ENCODE measurements at regions of chr17 and their contacts with region 1.

Region 1: DNA sequence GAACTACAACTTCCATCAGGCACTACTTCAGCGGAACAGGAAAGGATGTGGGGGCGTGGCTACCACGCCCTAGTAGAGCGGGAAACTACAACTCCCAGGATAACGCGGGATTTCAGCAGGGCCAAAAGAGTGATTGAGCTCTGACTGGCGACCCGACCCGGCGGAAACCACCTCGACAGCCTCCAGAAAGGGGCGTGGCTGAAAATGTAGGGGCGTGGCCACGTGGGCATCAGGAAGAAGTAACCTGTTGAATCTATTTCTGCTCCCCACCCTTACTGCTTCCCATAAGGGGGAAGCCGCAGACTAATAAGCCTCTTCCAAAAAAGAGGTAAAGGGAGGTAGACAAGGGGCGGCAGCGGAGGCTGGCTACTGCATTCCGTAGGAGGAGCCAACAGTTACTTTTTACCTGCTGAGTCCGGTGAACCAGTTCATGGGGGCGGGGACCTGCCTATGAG is at the start of gene TMEM102:
- DNase-seq: peak; percentile 95 to 97 (median 95)
- ATAC-seq: peak; percentile 87 to 94 (median 90)
- H3K4me3 ChIP-seq: peak within 1 kb of the TSS; percentile 9 to 75 (median 53)
- H3K27ac ChIP-seq: peak within 1 kb of the TSS in 11 of 12 donors; percentile 3 to 91 (median 52)
- H3K4me1 ChIP-seq: peaks cover 4 to 56% (median 40%) of the 10 kb centered on the region in 12 donors
- H3K27me3 ChIP-seq: peaks cover 0 to 35% (median 8%) of the 10 kb centered on the region in 9 donors
- CTCF ChIP-seq: peak in 1 of 12 donors; percentile 7
- POLR2A ChIP-seq: peak in 1 of 2 donors; percentile 49
- total RNA-seq, gene TMEM102: 1.7 to 6.8 (median 4.0) TPM

Region 2: DNA sequence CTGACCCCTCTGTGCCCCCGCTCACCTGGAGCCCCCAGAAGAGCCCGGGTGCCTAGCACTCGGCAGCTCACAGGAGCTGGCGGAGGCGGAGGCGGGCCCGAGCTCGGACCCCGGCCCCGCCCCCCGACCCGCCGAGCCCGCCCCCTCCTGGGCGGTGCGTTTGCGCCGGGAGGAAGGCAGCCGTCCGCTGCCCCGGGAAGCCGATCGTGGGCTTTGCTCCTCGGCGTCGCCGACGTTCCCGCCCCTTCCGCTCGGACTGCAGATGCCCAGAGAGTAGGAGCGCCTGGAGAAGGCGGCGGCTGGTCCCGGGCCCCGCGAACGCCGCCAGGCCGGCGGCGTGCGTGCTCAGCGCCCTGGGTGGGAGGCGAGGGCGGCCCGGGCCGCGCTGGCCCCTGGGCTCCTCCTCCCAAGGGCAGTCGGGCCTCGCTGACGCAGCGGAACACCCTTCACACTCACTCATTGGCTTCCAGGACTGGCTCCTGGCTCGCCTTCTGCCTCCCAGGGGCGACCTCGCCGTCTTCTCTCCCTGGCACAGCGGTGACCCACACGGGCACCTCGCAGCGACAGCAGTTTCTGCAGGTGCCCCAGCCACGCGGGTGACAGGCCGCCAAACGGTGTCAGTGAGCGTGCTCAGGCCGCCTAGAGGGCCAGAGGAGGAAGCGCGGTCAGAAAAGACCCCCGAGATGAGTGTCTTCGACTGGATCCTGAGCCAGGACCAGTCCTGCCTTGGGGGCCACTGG is 40.6 kb before region 1 on chr17 and contains the start of gene PLSCR3:
- intact Hi-C with region 1: loop called in 1 of 10 experiments (anchors 1 kb)
- DNase-seq: peak; percentile 88 to 94 (median 93)
- ATAC-seq: peak; percentile 75 to 94 (median 93)
- H3K4me3 ChIP-seq: peak within 1 kb of the TSS; percentile 76 to 96 (median 86)
- H3K27ac ChIP-seq: peak within 1 kb of the TSS; percentile 88 to 99 (median 96)
- H3K4me1 ChIP-seq: peaks cover 0 to 27% (median 17%) of the 10 kb centered on the region in 12 donors
- H3K27me3 ChIP-seq: no peaks in the 10 kb centered on the region
- CTCF ChIP-seq: peak in 8 of 12 donors; percentile 9 to 45 (median 31)
- POLR2A ChIP-seq: peak; percentile 50 to 93
- total RNA-seq, gene PLSCR3: 14.3 to 29.5 (median 16.4) TPM

Region 3: GRCh38 chr17:7403977-7404736 is 31.1 kb before region 1 on chr17 and contains the start of gene TMEM256:
- intact Hi-C with region 1: loop called in 3 of 10 experiments (anchors 2 to 5 kb)
- DNase-seq: peak; percentile 99
- ATAC-seq: peak; percentile 93 to 97 (median 96)
- H3K4me3 ChIP-seq: peak within 1 kb of the TSS; percentile 49 to 88 (median 72)
- H3K27ac ChIP-seq: peak within 1 kb of the TSS; percentile 83 to 98 (median 92)
- H3K4me1 ChIP-seq: peaks cover 5 to 34% (median 17%) of the 10 kb centered on the region in 12 donors
- H3K27me3 ChIP-seq: peaks cover 0 to 5% (median 0%) of the 10 kb centered on the region in 9 donors
- CTCF ChIP-seq: no peak
- POLR2A ChIP-seq: peak; percentile 94 to 99
- total RNA-seq, gene TMEM256: 51.9 to 78.7 (median 69.5) TPM